ENCODE measurements at regions of chr1 and their contacts with region 1.

Region 1: GRCh38 chr1:185238447-185238846 is 78.6 kb downstream of the IVNS1ABP start:
- DNase-seq: peak in 1 of 35 experiments; percentile 50
- ATAC-seq: peak in 3 of 4 experiments; percentile 42 to 71 (median 69)
- H3K4me3 ChIP-seq: no peak overlapping the region
- H3K4me3 Mint-ChIP-seq: peak overlapping the region in 2 of 3 donors; percentile 31 to 35
- H3K27ac ChIP-seq: no peak overlapping the region
- H3K27ac Mint-ChIP-seq: peak overlapping the region in 1 of 2 donors; percentile 5
- H3K4me1 ChIP-seq: peaks cover 0 to 14% of the 10 kb centered on the region in 2 experiments
- H3K4me1 Mint-ChIP-seq: peaks cover 30 to 38% (median 34%) of the 10 kb centered on the region in 3 donors
- H3K27me3 ChIP-seq: no peaks in the 10 kb centered on the region
- H3K27me3 Mint-ChIP-seq: no peaks in the 10 kb centered on the region

Region 2: DNA sequence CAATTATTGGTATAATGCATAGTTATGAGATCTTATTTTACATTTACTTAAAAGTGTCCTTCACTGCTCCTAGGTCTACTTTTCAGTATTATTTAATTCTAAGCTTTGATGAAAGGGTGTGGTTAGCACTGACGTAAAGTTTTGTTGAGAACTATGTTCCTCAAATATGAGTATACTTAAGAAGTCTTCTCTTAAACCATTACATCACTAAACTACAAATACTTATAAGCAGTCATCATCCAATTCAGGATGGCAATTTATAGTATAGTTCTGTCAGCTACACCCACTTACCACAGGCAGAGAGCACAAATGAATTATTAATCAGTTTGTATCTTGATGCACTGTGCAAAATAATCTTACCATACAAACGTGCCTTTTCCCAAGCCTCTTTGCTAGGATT is 108.7 kb before region 1 on chr1:
- CTCF ChIA-PET with region 1: no interaction called
- POLR2A ChIA-PET with region 1: no interaction called
- DNase-seq: no peak
- ATAC-seq: no peak
- H3K4me3 ChIP-seq: no peak overlapping the region
- H3K4me3 Mint-ChIP-seq: no peak overlapping the region
- H3K27ac ChIP-seq: no peak overlapping the region
- H3K27ac Mint-ChIP-seq: no peak overlapping the region
- H3K4me1 ChIP-seq: no peaks in the 10 kb centered on the region
- H3K4me1 Mint-ChIP-seq: no peaks in the 10 kb centered on the region
- H3K27me3 ChIP-seq: no peaks in the 10 kb centered on the region
- H3K27me3 Mint-ChIP-seq: no peaks in the 10 kb centered on the region

Region 3: GRCh38 chr1:185670187-185670627 is 431.8 kb after region 1 on chr1:
- CTCF ChIA-PET with region 1: interaction called, 19 read pairs
- POLR2A ChIA-PET with region 1: no interaction called
- DNase-seq: peak; percentile 19 to 76 (median 56)
- ATAC-seq: peak; percentile 66 to 84 (median 75)
- H3K4me3 ChIP-seq: no peak overlapping the region
- H3K4me3 Mint-ChIP-seq: no peak overlapping the region
- H3K27ac ChIP-seq: peak overlapping the region; percentile 15
- H3K27ac Mint-ChIP-seq: peak overlapping the region; percentile 40 to 50
- H3K4me1 ChIP-seq: peaks cover 11 to 17% of the 10 kb centered on the region in 2 experiments
- H3K4me1 Mint-ChIP-seq: peaks cover 32 to 34% (median 34%) of the 10 kb centered on the region in 3 donors
- H3K27me3 ChIP-seq: no peaks in the 10 kb centered on the region
- H3K27me3 Mint-ChIP-seq: no peaks in the 10 kb centered on the region

Region 4: DNA sequence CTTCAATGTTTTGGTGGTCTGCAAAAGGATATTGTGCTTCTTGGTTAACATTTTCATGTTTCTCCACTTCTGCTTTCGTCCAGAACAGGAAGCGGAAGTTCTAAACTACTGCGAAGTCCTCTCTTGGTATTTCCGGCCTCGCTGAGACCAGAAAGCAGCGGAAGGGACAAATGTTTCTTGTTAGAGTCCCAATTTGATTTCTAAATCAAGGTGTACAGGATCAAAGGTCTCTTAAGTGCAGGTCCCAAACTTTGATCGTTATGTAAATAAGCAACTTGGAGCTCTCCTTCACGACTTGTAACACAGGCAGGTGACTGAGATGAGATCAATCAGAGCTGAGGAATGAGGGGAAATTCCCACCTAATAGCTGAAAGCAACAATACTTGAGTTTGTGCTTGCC is 455.6 kb after region 1 on chr1:
- CTCF ChIA-PET with region 1: interaction called, 3 to 11 read pairs
- POLR2A ChIA-PET with region 1: no interaction called
- DNase-seq: peak in 13 of 35 experiments; percentile 2 to 56 (median 13)
- ATAC-seq: peak; percentile 27 to 81 (median 58)
- H3K4me3 ChIP-seq: peak overlapping the region; percentile 38
- H3K4me3 Mint-ChIP-seq: peak overlapping the region; percentile 73 to 82 (median 80)
- H3K27ac ChIP-seq: peak overlapping the region; percentile 74
- H3K27ac Mint-ChIP-seq: peak overlapping the region; percentile 94 to 96
- H3K4me1 ChIP-seq: peaks cover 11 to 20% of the 10 kb centered on the region in 2 experiments
- H3K4me1 Mint-ChIP-seq: peaks cover 19 to 23% (median 21%) of the 10 kb centered on the region in 3 donors
- H3K27me3 ChIP-seq: no peaks in the 10 kb centered on the region
- H3K27me3 Mint-ChIP-seq: peaks cover 2 to 4% of the 10 kb centered on the region in 2 donors

Measured in T-cell (primary cell).